Heart left ventricle (tissue), 16 donors: ENCODE measurements at regions of chr12 and their contacts with region 1.

Region 1: DNA sequence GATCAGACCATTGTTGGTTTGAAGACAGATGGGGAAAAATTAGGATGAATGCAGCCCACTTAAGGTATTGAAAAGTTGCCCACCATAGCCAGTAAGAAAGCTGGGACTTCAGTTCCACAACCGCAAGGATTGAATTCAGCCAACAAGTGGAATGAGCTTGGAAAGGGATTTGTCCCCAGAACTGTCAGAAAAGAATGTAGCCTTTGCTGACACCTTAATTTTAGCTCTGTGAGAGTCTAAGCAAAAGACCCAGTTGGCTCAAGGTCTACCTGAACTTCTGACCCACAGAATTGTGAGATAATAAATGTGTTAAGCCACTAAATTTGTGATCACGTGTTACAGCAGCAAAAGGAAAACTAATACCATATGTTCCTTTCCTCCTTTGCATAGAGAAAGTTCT is 29.4 kb downstream of the PPFIA2 start:
- DNase-seq: peak in 1 of 5 donors; percentile 5
- ATAC-seq: peak; percentile 80 to 93 (median 84)
- H3K4me3 ChIP-seq: no peak overlapping the region
- H3K27ac ChIP-seq: peak overlapping the region in 3 of 12 donors; percentile 45 to 68 (median 48)
- H3K4me1 ChIP-seq: peaks cover 0 to 5% (median 0%) of the 10 kb centered on the region in 12 donors
- H3K27me3 ChIP-seq: no peaks in the 10 kb centered on the region
- CTCF ChIP-seq: no peak
- POLR2A ChIP-seq: no peak

Region 2: DNA sequence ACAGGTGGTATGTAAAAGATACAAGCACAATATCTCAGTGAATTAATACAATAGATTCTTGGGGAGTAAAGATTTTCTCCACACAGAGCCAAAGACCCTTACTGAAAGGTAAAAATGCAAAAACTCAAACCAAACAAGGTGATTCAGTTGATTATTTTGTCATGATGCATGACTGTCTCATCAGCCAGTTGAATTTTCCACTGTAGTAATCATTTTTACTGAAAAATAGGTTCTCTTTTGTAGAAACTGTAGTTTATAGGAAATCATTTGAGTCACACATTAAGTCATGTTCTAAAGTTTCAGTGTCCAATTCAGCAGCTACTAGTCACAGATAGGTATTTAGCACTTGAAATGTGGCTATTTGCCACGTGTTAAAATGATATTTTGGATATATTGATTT is 24.2 kb before region 1 on chr12:
- intact Hi-C with region 1: no loop called
- DNase-seq: no peak
- ATAC-seq: no peak
- H3K4me3 ChIP-seq: no peak overlapping the region
- H3K27ac ChIP-seq: no peak overlapping the region
- H3K4me1 ChIP-seq: no peaks in the 10 kb centered on the region
- H3K27me3 ChIP-seq: no peaks in the 10 kb centered on the region
- CTCF ChIP-seq: no peak
- POLR2A ChIP-seq: no peak

Region 3: GRCh38 chr12:82057770-82058169 is 328.0 kb after region 1 on chr12:
- intact Hi-C with region 1: loop called in 1 of 10 experiments (anchors 10 kb)
- DNase-seq: no peak
- ATAC-seq: peak in 1 of 4 donors; percentile 34
- H3K4me3 ChIP-seq: no peak overlapping the region
- H3K27ac ChIP-seq: no peak overlapping the region
- H3K4me1 ChIP-seq: no peaks in the 10 kb centered on the region
- H3K27me3 ChIP-seq: no peaks in the 10 kb centered on the region
- CTCF ChIP-seq: no peak
- POLR2A ChIP-seq: no peak